ENCODE measurements at regions of chr12 and their contacts with region 1.

Region 1: GRCh38 chr12:42023733-42024494 is 120.8 kb downstream of the GXYLT1 start:
- DNase-seq: peak; percentile 73 to 90 (median 89)
- ATAC-seq: peak; percentile 90 to 92
- H3K4me3 ChIP-seq: peak overlapping the region; percentile 85
- H3K27ac ChIP-seq: no peak overlapping the region
- H3K4me1 ChIP-seq: no peaks in the 10 kb centered on the region
- H3K27me3 ChIP-seq: no peaks in the 10 kb centered on the region

Region 2: GRCh38 chr12:41277116-41277945 is 746.6 kb before region 1 on chr12:
- intact Hi-C with region 1: loop called (anchors 2 to 10 kb)
- DNase-seq: no peak
- ATAC-seq: no peak
- H3K4me3 ChIP-seq: no peak overlapping the region
- H3K27ac ChIP-seq: no peak overlapping the region
- H3K4me1 ChIP-seq: no peaks in the 10 kb centered on the region
- H3K27me3 ChIP-seq: no peaks in the 10 kb centered on the region

Region 3: DNA sequence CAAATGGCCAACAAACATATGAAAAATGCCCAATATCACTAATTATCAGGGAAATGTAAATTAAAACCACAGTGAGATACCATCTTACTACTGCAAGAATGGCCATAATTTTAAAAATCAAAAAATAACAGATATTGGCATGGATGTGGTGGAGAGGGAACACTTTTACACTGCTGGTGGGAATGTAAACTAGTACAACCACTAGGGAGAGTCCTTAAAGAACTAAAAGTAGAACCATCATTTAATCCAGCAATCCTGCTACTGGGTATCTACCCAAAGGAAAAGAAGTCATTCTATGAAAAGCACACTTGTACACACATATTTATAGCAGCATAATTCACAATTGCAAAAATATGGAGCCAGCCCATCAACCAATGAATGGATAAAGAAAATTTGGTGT is 338.9 kb before region 1 on chr12:
- intact Hi-C with region 1: loop called in 2 of 4 experiments (anchors 5 kb)
- DNase-seq: no peak
- ATAC-seq: no peak
- H3K4me3 ChIP-seq: no peak overlapping the region
- H3K27ac ChIP-seq: no peak overlapping the region
- H3K4me1 ChIP-seq: no peaks in the 10 kb centered on the region
- H3K27me3 ChIP-seq: no peaks in the 10 kb centered on the region

Measured in right cardiac atrium (tissue), 5 donors.